HCT116 (cell line): ENCODE measurements at regions of chr18 and their contacts with region 1.

Region 1: DNA sequence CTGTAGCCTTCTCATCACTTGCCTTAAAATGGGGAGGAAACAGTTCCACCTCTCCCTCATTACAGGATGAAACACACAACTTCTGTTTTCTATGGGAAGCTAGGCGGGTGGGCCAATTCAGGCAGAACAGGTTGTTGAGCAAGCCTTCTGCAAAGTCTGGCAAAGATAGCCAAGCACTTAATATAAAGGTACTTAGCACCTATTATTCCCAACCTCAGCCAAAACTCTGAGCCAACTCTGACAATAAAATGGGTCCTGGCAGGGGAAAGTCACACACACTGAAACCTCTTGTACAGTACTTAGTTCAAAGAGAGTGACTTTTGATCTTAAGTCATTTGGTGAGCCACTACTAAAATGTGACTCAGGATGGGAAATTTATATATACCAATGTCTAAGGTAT is 15.8 kb upstream of the SOCS6 start:
- DNase-seq: no peak
- ATAC-seq: no peak
- H3K4me3 ChIP-seq: no peak overlapping the region
- H3K27ac ChIP-seq: no peak overlapping the region
- H3K4me1 ChIP-seq: peaks cover 14 to 16% of the 10 kb centered on the region in 2 experiments
- H3K27me3 ChIP-seq: no peaks in the 10 kb centered on the region
- CTCF ChIP-seq: no peak
- POLR2A ChIP-seq: no peak
- RAD21 ChIP-seq: no peak

Region 2: GRCh38 chr18:70249118-70249517 is 23.9 kb before region 1 on chr18:
- CTCF ChIA-PET with region 1: no interaction called
- POLR2A ChIA-PET with region 1: no interaction called
- RAD21 ChIA-PET with region 1: no interaction called
- intact Hi-C with region 1: loop called (anchors 1 kb)
- DNase-seq: no peak
- ATAC-seq: peak; percentile 73
- H3K4me3 ChIP-seq: no peak overlapping the region
- H3K27ac ChIP-seq: peak overlapping the region; percentile 42
- H3K4me1 ChIP-seq: peaks cover 15 to 25% of the 10 kb centered on the region in 2 experiments
- H3K27me3 ChIP-seq: no peaks in the 10 kb centered on the region
- CTCF ChIP-seq: no peak
- POLR2A ChIP-seq: no peak
- RAD21 ChIP-seq: no peak